ENCODE measurements at regions of chr12 and their contacts with region 1.

Region 1: DNA sequence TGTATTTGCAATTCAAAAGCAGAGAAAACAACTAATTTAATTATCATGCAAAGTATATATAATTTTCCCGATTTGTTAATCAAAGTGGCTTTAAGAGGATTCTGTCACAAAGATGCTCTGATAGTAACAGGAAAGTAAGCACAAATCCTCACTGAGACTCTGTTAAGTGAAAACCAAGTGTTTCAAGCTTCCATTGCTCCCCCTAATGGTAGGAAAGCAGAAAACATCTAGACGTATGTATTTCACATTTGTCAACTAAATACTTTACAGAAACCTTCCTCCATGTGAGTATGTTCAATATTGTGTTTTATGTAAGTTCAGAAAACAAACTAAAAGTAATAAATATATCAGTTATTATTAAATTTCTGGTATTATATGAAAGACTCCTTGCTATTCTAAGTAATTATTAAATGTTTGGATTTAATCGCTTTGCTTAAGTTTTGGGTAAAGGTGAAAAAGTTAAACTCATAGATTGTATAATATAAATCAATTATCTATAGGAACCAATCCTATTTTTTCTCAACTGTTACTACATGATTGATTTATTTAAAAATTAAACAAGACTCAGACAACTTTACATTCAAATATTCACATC is 1.5 kb upstream of the NTS start:
- DNase-seq: no peak
- H3K4me3 ChIP-seq: no peak overlapping the region
- H3K27ac ChIP-seq: no peak overlapping the region
- H3K4me1 ChIP-seq: no peaks in the 10 kb centered on the region
- H3K27me3 ChIP-seq: no peaks in the 10 kb centered on the region
- CTCF ChIP-seq: peak in 9 of 11 experiments; percentile 24 to 63 (median 58)
- POLR2A ChIP-seq: no peak

Region 2: DNA sequence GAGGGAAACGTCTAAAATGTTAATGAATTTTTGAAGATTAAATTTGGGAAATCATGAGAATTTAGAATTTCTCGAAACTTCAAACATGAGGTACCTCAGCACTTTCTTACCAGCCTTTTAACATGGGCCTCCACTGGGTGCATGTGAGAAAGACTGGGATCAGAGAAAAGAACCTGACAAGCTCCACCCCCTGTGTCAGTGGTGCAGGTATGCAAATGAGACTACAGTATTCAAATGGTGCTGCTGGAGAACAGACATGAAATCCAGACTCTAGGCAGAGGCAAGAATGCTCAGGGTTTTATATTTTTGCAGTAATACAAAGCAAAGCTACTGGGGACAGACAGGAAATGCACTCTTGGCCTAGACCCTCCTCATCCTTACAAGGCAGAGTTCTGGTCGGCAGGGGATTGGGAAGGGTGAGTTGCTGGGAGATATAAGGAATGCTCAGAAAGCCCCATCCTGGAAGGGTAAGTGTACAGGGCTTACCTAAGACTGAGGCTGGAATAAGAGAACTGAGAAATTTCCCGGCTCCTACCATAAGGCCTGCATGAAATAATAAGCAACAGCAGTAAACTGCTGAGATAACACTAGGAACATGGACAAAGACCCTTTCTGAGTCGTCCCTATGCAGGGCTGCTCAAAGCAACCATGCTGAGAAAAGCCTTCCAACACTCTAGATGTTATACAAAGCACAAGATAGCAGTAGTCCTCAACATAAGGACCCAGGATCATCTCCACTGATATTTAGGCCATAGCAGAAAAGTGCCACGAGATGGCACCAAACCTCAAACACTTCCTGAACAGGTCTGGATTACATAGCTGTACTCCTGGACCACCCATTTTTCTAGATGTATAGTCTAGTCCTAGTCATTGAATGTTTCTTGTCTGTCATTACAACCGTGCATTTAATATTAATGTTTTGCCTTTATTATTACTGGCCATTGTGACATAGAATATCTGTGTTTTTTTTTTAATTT is 297.2 kb before region 1 on chr12:
- intact Hi-C with region 1: loop called (anchors 10 kb)
- DNase-seq: no peak
- H3K4me3 ChIP-seq: no peak overlapping the region
- H3K27ac ChIP-seq: no peak overlapping the region
- H3K4me1 ChIP-seq: no peaks in the 10 kb centered on the region
- H3K27me3 ChIP-seq: no peaks in the 10 kb centered on the region
- CTCF ChIP-seq: peak in 9 of 11 experiments; percentile 29 to 59 (median 46)
- POLR2A ChIP-seq: no peak

Region 3: GRCh38 chr12:85781766-85782165 is 90.8 kb before region 1 on chr12:
- intact Hi-C with region 1: no loop called
- DNase-seq: no peak
- H3K4me3 ChIP-seq: no peak overlapping the region
- H3K27ac ChIP-seq: no peak overlapping the region
- H3K4me1 ChIP-seq: no peaks in the 10 kb centered on the region
- H3K27me3 ChIP-seq: no peaks in the 10 kb centered on the region
- CTCF ChIP-seq: no peak
- POLR2A ChIP-seq: no peak

Region 4: GRCh38 chr12:85951823-85952222 is 79.2 kb after region 1 on chr12:
- intact Hi-C with region 1: no loop called
- DNase-seq: no peak
- H3K4me3 ChIP-seq: no peak overlapping the region
- H3K27ac ChIP-seq: no peak overlapping the region
- H3K4me1 ChIP-seq: no peaks in the 10 kb centered on the region
- H3K27me3 ChIP-seq: no peaks in the 10 kb centered on the region
- CTCF ChIP-seq: peak in 1 of 11 experiments; percentile 12
- POLR2A ChIP-seq: no peak

Measured in spleen (tissue), 13 donors.